ENCODE measurements at regions of chr9 and their contacts with region 1.

Region 1: DNA sequence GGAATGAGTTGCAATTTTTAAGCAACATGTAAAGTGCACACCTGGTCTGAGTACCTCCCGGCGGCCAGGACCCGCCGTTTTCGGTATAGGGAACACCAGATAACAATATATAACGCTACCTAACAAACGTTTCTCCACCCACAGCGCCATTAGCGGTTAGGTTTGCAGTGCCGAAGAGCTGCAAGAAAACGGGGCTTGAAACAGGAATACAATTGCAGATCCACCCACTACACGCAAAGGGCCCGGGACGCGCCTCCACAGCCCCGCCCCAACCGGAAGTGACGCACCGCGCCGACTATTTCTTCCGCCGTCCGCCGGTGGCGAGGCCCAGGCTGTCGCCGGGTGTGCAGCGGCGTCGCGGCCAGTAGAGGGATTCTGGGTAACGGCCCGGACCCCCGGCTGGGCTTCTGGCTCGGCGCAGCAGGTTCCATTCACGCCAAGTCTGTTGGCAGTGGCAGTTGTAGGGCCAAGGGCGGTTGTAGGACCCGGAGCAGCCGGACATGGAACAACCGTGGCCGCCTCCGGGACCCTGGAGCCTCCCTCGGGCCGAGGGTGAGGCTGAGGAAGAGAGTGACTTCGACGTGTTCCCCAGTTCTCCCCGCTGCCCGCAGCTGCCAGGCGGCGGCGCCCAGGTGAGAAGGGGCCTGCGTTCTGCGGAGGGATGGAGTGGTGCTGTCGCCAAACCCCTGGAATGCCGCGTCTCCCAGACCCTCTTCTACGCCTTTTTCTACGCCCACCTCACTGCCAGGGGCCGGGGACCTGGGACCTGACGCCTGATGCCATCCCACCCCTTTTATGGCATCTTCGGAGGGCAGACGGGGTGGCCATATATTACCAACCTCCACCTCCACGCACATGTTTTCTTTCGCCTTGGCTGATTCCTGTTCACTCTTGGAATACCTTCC is at the start of gene CDC37L1:
- DNase-seq: peak; percentile 97 to 100 (median 99)
- ATAC-seq: peak; percentile 82
- H3K4me3 ChIP-seq: peak within 1 kb of the TSS; percentile 95
- H3K4me3 Mint-ChIP-seq: no peak within 1 kb of the TSS
- H3K27ac ChIP-seq: peak within 1 kb of the TSS; percentile 95
- H3K27ac Mint-ChIP-seq: no peak within 1 kb of the TSS
- H3K4me1 ChIP-seq: peaks cover 20% of the 10 kb centered on the region
- H3K4me1 Mint-ChIP-seq: peaks cover 17% of the 10 kb centered on the region
- H3K27me3 ChIP-seq: no peaks in the 10 kb centered on the region
- H3K27me3 Mint-ChIP-seq: no peaks in the 10 kb centered on the region
- CTCF ChIP-seq: peak; percentile 74
- total RNA-seq, gene CDC37L1: 49.1 to 53.4 TPM

Region 2: GRCh38 chr9:2837915-2838314 is 1841.6 kb before region 1 on chr9:
- CTCF ChIA-PET with region 1: no interaction called
- POLR2A ChIA-PET with region 1: no interaction called
- intact Hi-C with region 1: loop called in 1 of 2 experiments (anchors 5 kb)
- DNase-seq: peak in 1 of 14 experiments; percentile 23
- ATAC-seq: no peak
- H3K4me3 ChIP-seq: no peak overlapping the region
- H3K4me3 Mint-ChIP-seq: no peak overlapping the region
- H3K27ac ChIP-seq: no peak overlapping the region
- H3K27ac Mint-ChIP-seq: no peak overlapping the region
- H3K4me1 ChIP-seq: peaks cover 8% of the 10 kb centered on the region
- H3K4me1 Mint-ChIP-seq: peaks cover 39% of the 10 kb centered on the region
- H3K27me3 ChIP-seq: no peaks in the 10 kb centered on the region
- H3K27me3 Mint-ChIP-seq: no peaks in the 10 kb centered on the region
- CTCF ChIP-seq: peak; percentile 16

Region 3: GRCh38 chr9:4604678-4605095 is 74.8 kb before region 1 on chr9:
- CTCF ChIA-PET with region 1: no interaction called
- POLR2A ChIA-PET with region 1: interaction called, 14 read pairs
- intact Hi-C with region 1: loop called in 1 of 2 experiments (anchors 5 kb)
- DNase-seq: peak in 13 of 14 experiments; percentile 20 to 83 (median 61)
- ATAC-seq: peak; percentile 74
- H3K4me3 ChIP-seq: no peak overlapping the region
- H3K4me3 Mint-ChIP-seq: no peak overlapping the region
- H3K27ac ChIP-seq: no peak overlapping the region
- H3K27ac Mint-ChIP-seq: peak overlapping the region; percentile 66
- H3K4me1 ChIP-seq: peaks cover 26% of the 10 kb centered on the region
- H3K4me1 Mint-ChIP-seq: peaks cover 54% of the 10 kb centered on the region
- H3K27me3 ChIP-seq: no peaks in the 10 kb centered on the region
- H3K27me3 Mint-ChIP-seq: no peaks in the 10 kb centered on the region
- CTCF ChIP-seq: peak; percentile 77

Region 4: GRCh38 chr9:4615251-4615650 is 64.3 kb before region 1 on chr9:
- CTCF ChIA-PET with region 1: no interaction called
- POLR2A ChIA-PET with region 1: no interaction called
- intact Hi-C with region 1: no loop called
- DNase-seq: no peak
- ATAC-seq: no peak
- H3K4me3 ChIP-seq: no peak overlapping the region
- H3K4me3 Mint-ChIP-seq: no peak overlapping the region
- H3K27ac ChIP-seq: no peak overlapping the region
- H3K27ac Mint-ChIP-seq: no peak overlapping the region
- H3K4me1 ChIP-seq: peaks cover 10% of the 10 kb centered on the region
- H3K4me1 Mint-ChIP-seq: peaks cover 14% of the 10 kb centered on the region
- H3K27me3 ChIP-seq: no peaks in the 10 kb centered on the region
- H3K27me3 Mint-ChIP-seq: no peaks in the 10 kb centered on the region
- CTCF ChIP-seq: no peak

Region 5: GRCh38 chr9:4667681-4668080 is 11.8 kb before region 1 on chr9:
- CTCF ChIA-PET with region 1: interaction called, 22 read pairs
- POLR2A ChIA-PET with region 1: interaction called, 95 read pairs
- intact Hi-C with region 1: loop called (anchors 1 kb)
- DNase-seq: peak in 7 of 14 experiments; percentile 13 to 80 (median 38)
- ATAC-seq: peak; percentile 76
- H3K4me3 ChIP-seq: no peak overlapping the region
- H3K4me3 Mint-ChIP-seq: peak overlapping the region; percentile 97
- H3K27ac ChIP-seq: no peak overlapping the region
- H3K27ac Mint-ChIP-seq: peak overlapping the region; percentile 88
- H3K4me1 ChIP-seq: peaks cover 50% of the 10 kb centered on the region
- H3K4me1 Mint-ChIP-seq: peaks cover 70% of the 10 kb centered on the region
- H3K27me3 ChIP-seq: no peaks in the 10 kb centered on the region
- H3K27me3 Mint-ChIP-seq: no peaks in the 10 kb centered on the region
- CTCF ChIP-seq: no peak

Region 6: DNA sequence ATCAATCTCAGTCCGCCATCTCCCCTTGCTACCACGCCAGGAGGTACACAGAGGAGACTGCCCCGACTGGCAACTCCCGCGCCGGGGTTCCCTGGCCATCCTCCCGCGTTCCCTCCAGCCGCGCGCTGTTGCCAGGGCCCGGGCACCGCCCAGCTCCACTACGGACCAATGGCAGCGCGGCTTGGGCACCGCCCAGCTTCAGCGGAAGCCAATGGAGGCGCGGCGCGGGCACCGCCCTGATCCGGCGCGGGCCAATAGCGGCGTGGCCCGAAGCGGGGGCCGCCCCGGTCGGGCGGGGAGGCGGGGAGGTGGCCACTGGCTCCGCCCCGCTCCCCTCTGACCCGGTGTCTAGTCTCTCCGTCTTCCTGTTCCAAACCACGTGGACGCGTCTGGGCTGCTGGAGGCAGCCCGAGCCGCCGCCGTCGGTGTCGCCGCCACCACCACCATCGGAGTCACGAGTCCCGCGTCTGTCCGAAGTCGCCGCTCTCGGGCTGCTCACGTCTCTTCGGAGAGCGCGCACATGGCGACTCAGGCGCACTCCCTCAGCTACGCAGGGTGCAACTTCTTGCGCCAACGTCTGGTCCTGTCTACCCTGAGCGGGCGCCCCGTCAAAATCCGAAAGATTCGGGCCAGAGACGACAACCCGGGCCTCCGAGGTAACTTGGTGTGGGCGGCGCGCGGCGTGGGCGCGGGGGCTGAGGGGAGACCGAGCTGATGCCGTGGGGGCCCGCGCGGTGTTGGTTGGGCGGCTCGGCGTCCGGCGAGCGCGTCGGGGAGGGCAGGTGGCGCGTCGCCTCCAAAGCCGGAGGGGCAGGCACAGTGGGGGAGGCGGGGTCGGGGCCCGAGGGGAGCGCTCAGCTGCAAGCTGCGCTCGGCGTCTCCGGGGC is 113.3 kb after region 1 on chr9 and contains the start of gene RCL1:
- CTCF ChIA-PET with region 1: no interaction called
- POLR2A ChIA-PET with region 1: interaction called, 18 read pairs
- intact Hi-C with region 1: loop called in 1 of 2 experiments (anchors 5 kb)
- DNase-seq: peak; percentile 89 to 98 (median 94)
- ATAC-seq: peak; percentile 89
- H3K4me3 ChIP-seq: peak within 1 kb of the TSS; percentile 87
- H3K4me3 Mint-ChIP-seq: peak within 1 kb of the TSS; percentile 97
- H3K27ac ChIP-seq: peak within 1 kb of the TSS; percentile 83 to 87
- H3K27ac Mint-ChIP-seq: peak within 1 kb of the TSS; percentile 92
- H3K4me1 ChIP-seq: peaks cover 25% of the 10 kb centered on the region
- H3K4me1 Mint-ChIP-seq: peaks cover 45% of the 10 kb centered on the region
- H3K27me3 ChIP-seq: no peaks in the 10 kb centered on the region
- H3K27me3 Mint-ChIP-seq: no peaks in the 10 kb centered on the region
- CTCF ChIP-seq: no peak
- total RNA-seq, gene RCL1: 33.8 to 35.5 TPM

Region 7: DNA sequence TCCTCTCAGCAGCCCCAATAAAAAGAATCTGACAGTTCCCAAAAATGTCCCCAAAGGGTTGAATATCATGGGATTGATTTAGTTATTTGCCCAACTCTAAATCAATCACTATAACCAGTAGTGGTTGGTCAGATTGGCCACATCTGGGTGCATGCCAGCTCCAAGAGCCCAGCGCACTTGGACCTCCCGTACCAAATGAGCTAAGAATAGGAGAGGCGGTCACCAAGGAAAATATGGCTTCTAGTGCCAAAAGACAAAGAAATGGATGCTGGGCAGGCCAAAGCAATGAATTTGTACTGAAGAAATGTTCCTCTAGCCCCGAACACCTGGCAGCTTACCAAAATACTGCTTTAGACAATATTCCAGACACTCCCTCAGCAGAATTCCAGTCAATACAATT is 193.5 kb after region 1 on chr9:
- CTCF ChIA-PET with region 1: no interaction called
- POLR2A ChIA-PET with region 1: no interaction called
- intact Hi-C with region 1: no loop called
- DNase-seq: no peak
- ATAC-seq: no peak
- H3K4me3 ChIP-seq: no peak overlapping the region
- H3K4me3 Mint-ChIP-seq: no peak overlapping the region
- H3K27ac ChIP-seq: no peak overlapping the region
- H3K27ac Mint-ChIP-seq: no peak overlapping the region
- H3K4me1 ChIP-seq: no peaks in the 10 kb centered on the region
- H3K4me1 Mint-ChIP-seq: no peaks in the 10 kb centered on the region
- H3K27me3 ChIP-seq: no peaks in the 10 kb centered on the region
- H3K27me3 Mint-ChIP-seq: no peaks in the 10 kb centered on the region
- CTCF ChIP-seq: no peak

Measured in CD4-positive, alpha-beta T cell (primary cell).